CD8-positive, alpha-beta memory T cell (primary cell): ENCODE measurements at regions of chr11 and their contacts with region 1.

Region 1: GRCh38 chr11:59158206-59159068 is 13.5 kb upstream of the DTX4 start:
- DNase-seq: peak; percentile 27 to 74 (median 60)
- H3K4me3 ChIP-seq: no peak overlapping the region
- H3K4me3 Mint-ChIP-seq: no peak overlapping the region
- H3K27ac ChIP-seq: no peak overlapping the region
- H3K27ac Mint-ChIP-seq: peak overlapping the region in 4 of 8 donors; percentile 21 to 77 (median 68)
- H3K4me1 ChIP-seq: no peaks in the 10 kb centered on the region
- H3K4me1 Mint-ChIP-seq: peaks cover 2 to 5% (median 5%) of the 10 kb centered on the region in 3 donors
- H3K27me3 ChIP-seq: peaks cover 3% of the 10 kb centered on the region
- H3K27me3 Mint-ChIP-seq: peaks cover 4 to 18% of the 10 kb centered on the region in 2 donors

Region 2: DNA sequence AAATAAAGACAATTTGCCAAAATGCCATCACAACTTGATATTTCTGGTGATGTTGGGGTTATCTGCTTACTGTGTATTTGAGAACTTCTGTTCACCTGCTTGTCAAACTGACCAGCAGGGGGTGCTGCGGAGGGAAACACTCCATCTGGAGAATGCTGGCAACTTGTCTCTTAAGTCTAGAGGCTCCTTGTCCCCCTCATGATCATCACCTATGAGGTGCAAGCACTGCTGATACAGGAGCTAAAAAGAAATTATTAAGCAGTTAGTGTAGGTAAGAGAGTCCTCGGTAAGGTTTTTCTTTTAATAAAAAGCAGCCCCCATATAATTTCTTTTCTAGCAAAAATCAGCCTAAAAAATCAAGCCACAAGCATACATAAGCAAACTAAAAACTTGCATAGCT is 105.0 kb before region 1 on chr11:
- CTCF ChIA-PET with region 1: interaction called, 25 read pairs
- POLR2A ChIA-PET with region 1: no interaction called
- DNase-seq: peak; percentile 61 to 82 (median 73)
- H3K4me3 ChIP-seq: no peak overlapping the region
- H3K4me3 Mint-ChIP-seq: no peak overlapping the region
- H3K27ac ChIP-seq: no peak overlapping the region
- H3K27ac Mint-ChIP-seq: no peak overlapping the region
- H3K4me1 ChIP-seq: no peaks in the 10 kb centered on the region
- H3K4me1 Mint-ChIP-seq: peaks cover 6 to 8% (median 6%) of the 10 kb centered on the region in 3 donors
- H3K27me3 ChIP-seq: no peaks in the 10 kb centered on the region
- H3K27me3 Mint-ChIP-seq: peaks cover 9 to 39% of the 10 kb centered on the region in 2 donors

Region 3: GRCh38 chr11:59097113-59097708 is 61.2 kb before region 1 on chr11:
- CTCF ChIA-PET with region 1: interaction called, 16 read pairs
- POLR2A ChIA-PET with region 1: no interaction called
- DNase-seq: peak; percentile 50 to 77 (median 57)
- H3K4me3 ChIP-seq: no peak overlapping the region
- H3K4me3 Mint-ChIP-seq: no peak overlapping the region
- H3K27ac ChIP-seq: no peak overlapping the region
- H3K27ac Mint-ChIP-seq: no peak overlapping the region
- H3K4me1 ChIP-seq: no peaks in the 10 kb centered on the region
- H3K4me1 Mint-ChIP-seq: peaks cover 9% of the 10 kb centered on the region in 3 donors
- H3K27me3 ChIP-seq: no peaks in the 10 kb centered on the region
- H3K27me3 Mint-ChIP-seq: peaks cover 29 to 50% of the 10 kb centered on the region in 2 donors

Region 4: GRCh38 chr11:59142530-59143507 is 15.6 kb before region 1 on chr11 and contains the start of gene FAM111A:
- CTCF ChIA-PET with region 1: interaction called, 20 read pairs
- POLR2A ChIA-PET with region 1: no interaction called
- DNase-seq: peak; percentile 85 to 93 (median 90)
- H3K4me3 ChIP-seq: peak within 1 kb of the TSS; percentile 89
- H3K4me3 Mint-ChIP-seq: peak within 1 kb of the TSS; percentile 95 to 99 (median 97)
- H3K27ac ChIP-seq: peak within 1 kb of the TSS; percentile 89
- H3K27ac Mint-ChIP-seq: peak within 1 kb of the TSS; percentile 92 to 99 (median 96)
- H3K4me1 ChIP-seq: peaks cover 30% of the 10 kb centered on the region
- H3K4me1 Mint-ChIP-seq: peaks cover 44 to 67% (median 63%) of the 10 kb centered on the region in 3 donors
- H3K27me3 ChIP-seq: no peaks in the 10 kb centered on the region
- H3K27me3 Mint-ChIP-seq: no peaks in the 10 kb centered on the region
- total RNA-seq, gene FAM111A: 71.1 to 73.5 TPM